Sigmoid colon (tissue), 7 donors: ENCODE measurements at regions of chr6 and their contacts with region 1.

Region 1: DNA sequence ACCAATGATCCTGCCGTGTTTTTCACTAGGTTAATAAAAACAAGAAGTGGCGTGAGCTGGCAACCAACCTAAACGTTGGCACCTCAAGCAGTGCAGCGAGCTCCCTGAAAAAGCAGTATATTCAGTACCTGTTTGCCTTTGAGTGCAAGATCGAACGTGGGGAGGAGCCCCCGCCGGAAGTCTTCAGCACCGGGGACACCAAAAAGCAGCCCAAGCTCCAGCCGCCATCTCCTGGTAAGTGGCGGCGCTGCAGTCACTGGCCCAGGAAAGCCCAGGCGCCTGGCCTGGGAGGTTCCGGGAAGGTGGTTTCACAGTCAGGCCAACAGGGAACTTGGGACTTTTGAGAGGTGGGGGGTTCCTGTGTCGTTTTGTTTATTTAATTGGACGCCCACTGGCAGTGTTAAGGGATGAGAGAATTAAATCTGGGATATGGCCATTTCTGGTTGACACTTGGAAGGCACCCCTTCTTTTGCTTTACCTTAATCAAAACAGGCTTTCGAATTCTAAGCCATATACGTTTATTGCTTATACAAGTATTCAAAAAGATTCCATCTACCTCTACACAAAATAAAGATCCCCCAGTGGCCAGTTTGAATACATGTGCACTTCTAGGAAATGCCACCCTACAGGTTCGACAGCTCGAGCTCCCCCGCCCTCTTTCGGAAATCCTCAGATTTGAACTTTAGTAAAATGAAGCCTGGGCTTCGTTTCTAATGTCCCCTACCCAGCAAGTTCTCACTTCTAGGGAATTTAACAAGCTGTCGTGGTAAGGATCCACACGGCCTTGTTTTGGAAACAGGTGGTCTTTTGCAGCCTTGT is 138.9 kb downstream of the TMEM242 start:
- DNase-seq: peak; percentile 83
- H3K4me3 ChIP-seq: peak overlapping the region in 1 of 4 donors; percentile 19
- H3K27ac ChIP-seq: peak overlapping the region in 1 of 4 donors; percentile 1
- H3K4me1 ChIP-seq: peaks cover 0 to 30% (median 29%) of the 10 kb centered on the region in 4 donors
- H3K27me3 ChIP-seq: no peaks in the 10 kb centered on the region
- CTCF ChIP-seq: peak; percentile 78 to 92 (median 84)
- EP300 ChIP-seq: no peak
- POLR2A ChIP-seq: no peak

Region 2: GRCh38 chr6:156564127-156564806 is 620.1 kb before region 1 on chr6:
- intact Hi-C with region 1: loop called (anchors 2 kb)
- DNase-seq: peak; percentile 90
- H3K4me3 ChIP-seq: no peak overlapping the region
- H3K27ac ChIP-seq: peak overlapping the region in 2 of 4 donors; percentile 18 to 27
- H3K4me1 ChIP-seq: peaks cover 0 to 15% (median 6%) of the 10 kb centered on the region in 4 donors
- H3K27me3 ChIP-seq: no peaks in the 10 kb centered on the region
- CTCF ChIP-seq: peak; percentile 80 to 93 (median 90)
- EP300 ChIP-seq: no peak
- POLR2A ChIP-seq: no peak

Region 3: DNA sequence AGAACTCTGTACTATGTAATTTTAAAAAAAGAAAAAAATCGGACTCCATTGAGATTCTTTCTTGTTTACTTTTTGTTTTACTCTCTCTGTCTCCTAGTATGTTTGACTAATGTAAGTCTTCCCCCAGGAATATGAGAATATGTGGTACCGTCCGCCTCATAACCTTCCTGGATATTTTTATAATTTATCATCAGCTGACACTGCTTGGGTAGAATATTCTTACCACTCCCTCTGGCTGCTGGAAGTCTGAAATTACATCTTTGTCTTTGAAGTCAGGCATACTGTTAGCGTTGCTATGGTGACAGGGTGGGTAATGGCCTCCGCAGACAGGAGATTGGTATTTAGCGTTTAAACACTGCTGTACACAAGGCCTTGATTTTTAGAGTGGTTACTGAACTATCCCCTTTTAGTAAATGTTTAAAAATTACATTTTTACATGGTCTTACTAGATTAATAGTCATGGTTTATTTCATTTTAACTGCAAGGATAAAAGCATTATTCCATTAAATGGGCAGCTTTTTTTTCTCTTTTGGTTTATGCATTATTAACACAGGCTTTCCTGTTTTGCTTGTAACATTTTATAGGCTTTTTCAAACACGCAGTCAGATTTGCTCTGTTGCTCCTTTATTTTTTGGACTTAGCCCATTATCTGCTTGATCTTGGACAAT is 230.8 kb before region 1 on chr6:
- intact Hi-C with region 1: loop called (anchors 5 kb)
- DNase-seq: no peak
- H3K4me3 ChIP-seq: no peak overlapping the region
- H3K27ac ChIP-seq: peak overlapping the region; percentile 34 to 73 (median 54)
- H3K4me1 ChIP-seq: peaks cover 0 to 82% (median 76%) of the 10 kb centered on the region in 4 donors
- H3K27me3 ChIP-seq: no peaks in the 10 kb centered on the region
- CTCF ChIP-seq: peak in 3 of 4 experiments; percentile 29 to 33 (median 31)
- EP300 ChIP-seq: no peak
- POLR2A ChIP-seq: no peak

Region 4: DNA sequence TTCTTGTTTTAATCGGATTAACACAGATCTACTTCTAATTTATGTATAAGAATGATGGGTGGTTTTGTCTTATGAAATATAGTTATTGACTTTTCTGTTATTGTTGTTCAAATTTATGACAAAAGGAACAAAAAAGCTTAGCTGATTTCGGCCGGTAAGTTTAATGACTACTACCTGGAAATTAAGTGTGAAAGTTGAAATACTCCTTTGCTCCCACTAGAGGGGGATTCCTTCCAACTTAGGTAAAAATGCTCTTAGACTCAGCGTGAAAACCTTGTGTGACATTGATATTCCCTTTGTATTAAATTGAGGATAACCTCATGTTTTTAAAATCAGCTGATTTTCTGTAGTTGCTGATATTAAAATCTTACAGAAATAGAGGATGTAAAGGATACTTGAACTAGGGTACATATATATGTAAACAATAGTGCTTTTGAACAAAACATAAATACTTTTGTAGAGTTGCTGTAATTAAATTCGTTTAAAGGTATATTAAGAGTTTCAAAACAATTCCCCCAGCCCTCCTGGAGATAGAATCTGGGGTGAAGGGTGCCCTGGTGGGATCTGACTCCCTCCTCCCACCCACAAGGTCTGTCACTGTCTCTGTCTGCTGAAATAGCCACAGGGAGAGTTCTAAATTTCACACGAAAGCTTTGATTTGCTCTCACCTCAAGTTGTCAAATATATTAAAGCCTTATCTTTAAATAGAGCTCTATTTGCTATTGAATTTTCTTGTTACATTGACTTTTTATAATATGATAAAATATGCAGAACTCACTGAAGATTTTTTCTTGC is 149.8 kb before region 1 on chr6:
- intact Hi-C with region 1: loop called (anchors 2 kb)
- DNase-seq: no peak
- H3K4me3 ChIP-seq: no peak overlapping the region
- H3K27ac ChIP-seq: peak overlapping the region in 1 of 4 donors; percentile 70
- H3K4me1 ChIP-seq: peaks cover 0 to 47% (median 42%) of the 10 kb centered on the region in 4 donors
- H3K27me3 ChIP-seq: no peaks in the 10 kb centered on the region
- CTCF ChIP-seq: peak in 3 of 4 experiments; percentile 57 to 68 (median 64)
- EP300 ChIP-seq: no peak
- POLR2A ChIP-seq: no peak

Region 5: DNA sequence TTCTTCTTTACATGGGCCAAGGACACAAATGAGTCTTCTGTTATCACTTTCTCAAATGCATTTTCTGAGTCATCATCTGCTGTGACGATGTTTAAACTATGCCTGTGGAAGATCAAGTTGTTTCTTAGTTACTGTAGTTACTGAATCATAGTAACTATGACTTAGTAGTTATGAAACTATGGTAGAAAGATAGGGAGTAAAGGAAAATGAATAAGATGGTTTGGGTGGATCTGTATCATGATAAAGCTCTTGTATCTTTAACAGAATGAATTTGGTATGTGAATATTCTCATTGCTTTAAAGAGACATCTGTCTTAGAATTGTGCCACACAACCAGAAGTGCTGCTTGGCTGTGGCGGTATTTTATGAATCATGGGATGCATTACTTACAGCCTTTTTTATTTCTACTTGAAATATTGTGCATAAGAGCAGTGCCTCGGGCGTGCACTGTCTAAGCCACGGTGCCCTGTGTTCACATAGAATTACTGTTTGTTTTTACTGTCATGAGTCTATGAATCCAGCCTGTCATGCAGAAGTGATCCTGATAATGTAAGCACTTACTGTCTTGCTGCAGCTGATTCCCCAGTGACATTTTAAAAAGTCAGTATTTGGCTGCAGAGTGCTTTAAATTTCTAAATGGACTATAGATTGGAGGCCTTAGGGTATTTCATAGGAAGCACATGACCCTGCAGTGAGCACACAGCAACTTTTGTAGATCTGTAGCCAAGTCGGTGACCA is 76.3 kb before region 1 on chr6:
- intact Hi-C with region 1: no loop called
- DNase-seq: no peak
- H3K4me3 ChIP-seq: no peak overlapping the region
- H3K27ac ChIP-seq: peak overlapping the region; percentile 52 to 73 (median 72)
- H3K4me1 ChIP-seq: peaks cover 0 to 29% (median 20%) of the 10 kb centered on the region in 4 donors
- H3K27me3 ChIP-seq: no peaks in the 10 kb centered on the region
- CTCF ChIP-seq: no peak
- EP300 ChIP-seq: peak in 2 of 4 donors; percentile 26 to 39
- POLR2A ChIP-seq: no peak

Region 6: DNA sequence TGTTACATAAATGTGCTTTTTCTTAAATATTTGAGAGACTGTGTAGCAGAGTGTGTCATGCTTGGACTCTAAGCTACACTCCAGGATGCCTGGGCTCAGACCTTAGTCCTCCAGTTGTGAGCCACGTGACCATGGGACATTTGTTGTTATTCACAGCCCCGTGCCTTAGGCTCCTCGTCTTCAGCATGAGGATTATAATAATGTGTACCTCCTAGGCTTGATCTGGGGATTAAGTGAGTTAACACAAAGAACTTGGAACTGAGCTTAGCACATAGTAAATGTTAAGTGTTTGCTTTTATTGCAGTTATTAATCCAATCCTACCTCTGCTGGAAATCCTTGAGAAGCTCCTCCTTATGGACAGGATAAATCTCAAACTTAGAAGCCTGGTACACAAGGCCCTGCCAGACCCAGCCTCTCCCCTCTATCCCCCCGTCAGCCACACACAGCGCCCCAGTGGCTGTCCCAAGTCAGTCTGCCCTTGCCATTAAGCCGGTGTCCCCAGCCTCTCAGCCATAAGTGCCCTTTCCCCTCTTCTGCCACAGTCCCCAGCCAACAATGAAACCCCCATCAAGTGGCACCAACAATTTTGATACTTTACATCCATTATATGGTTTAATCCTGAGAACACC is 38.6 kb before region 1 on chr6:
- intact Hi-C with region 1: loop called (anchors 2 kb)
- DNase-seq: no peak
- H3K4me3 ChIP-seq: no peak overlapping the region
- H3K27ac ChIP-seq: peak overlapping the region in 3 of 4 donors; percentile 46 to 70 (median 66)
- H3K4me1 ChIP-seq: peaks cover 0 to 68% (median 53%) of the 10 kb centered on the region in 4 donors
- H3K27me3 ChIP-seq: no peaks in the 10 kb centered on the region
- CTCF ChIP-seq: no peak
- EP300 ChIP-seq: no peak
- POLR2A ChIP-seq: no peak